ENCODE measurements at regions of chr4 and their contacts with region 1.

Region 1: DNA sequence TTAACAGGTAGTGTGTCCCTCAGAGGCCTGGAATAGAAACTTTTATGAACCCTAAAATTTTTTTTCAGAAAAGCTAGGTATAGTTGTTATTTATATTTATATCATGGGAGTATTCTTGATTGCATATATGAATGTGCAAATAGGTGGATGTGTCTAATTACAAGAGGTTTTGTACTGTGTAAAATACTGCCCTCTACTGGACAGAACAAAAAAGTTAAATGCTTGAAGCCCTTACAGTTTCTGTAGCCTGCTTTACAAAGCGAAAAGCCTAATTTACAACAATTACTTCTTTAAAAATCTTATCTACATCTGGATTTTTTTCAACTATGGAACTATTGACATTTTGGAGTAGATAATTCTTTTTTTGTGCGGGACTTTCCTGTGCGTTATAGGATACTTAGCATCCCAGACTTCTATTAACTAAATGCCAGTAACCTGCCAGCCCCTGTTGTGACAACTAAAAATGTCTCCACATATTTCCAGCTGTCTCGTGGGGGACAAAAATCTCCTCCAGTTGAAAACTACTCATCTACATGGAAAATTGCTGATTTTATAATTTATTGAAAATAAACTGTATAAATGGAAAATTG is 35.1 kb downstream of the ENPEP start:
- DNase-seq: peak in 1 of 2 experiments; percentile 38
- H3K4me3 ChIP-seq: no peak overlapping the region
- H3K4me3 Mint-ChIP-seq: no peak overlapping the region
- H3K27ac Mint-ChIP-seq: no peak overlapping the region
- H3K4me1 ChIP-seq: no peaks in the 10 kb centered on the region
- H3K4me1 Mint-ChIP-seq: no peaks in the 10 kb centered on the region
- H3K27me3 ChIP-seq: no peaks in the 10 kb centered on the region
- H3K27me3 Mint-ChIP-seq: no peaks in the 10 kb centered on the region
- CTCF ChIP-seq: peak; percentile 56 to 60

Region 2: DNA sequence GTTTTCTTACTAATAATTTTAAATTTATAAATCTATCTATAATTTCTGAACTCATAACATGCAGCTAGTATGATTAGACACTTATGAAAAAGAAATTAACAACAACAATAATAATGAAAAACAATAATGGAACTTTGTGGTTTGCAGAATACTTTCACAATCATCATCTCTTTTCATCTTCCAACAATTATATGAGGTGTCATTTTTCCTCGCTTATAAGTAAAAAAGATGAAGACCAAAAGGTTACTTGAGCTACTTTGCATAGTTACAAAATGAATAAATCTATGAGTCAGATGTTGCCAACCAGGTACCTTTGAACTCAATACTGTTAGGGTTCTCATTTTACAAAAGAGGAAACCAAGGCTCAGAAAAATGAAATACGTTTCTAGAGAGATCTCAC is 214.2 kb before region 1 on chr4:
- CTCF ChIA-PET with region 1: no interaction called
- POLR2A ChIA-PET with region 1: no interaction called
- intact Hi-C with region 1: no loop called
- DNase-seq: no peak
- H3K4me3 ChIP-seq: no peak overlapping the region
- H3K4me3 Mint-ChIP-seq: no peak overlapping the region
- H3K27ac Mint-ChIP-seq: no peak overlapping the region
- H3K4me1 ChIP-seq: no peaks in the 10 kb centered on the region
- H3K4me1 Mint-ChIP-seq: no peaks in the 10 kb centered on the region
- H3K27me3 ChIP-seq: no peaks in the 10 kb centered on the region
- H3K27me3 Mint-ChIP-seq: peaks cover 10% of the 10 kb centered on the region
- CTCF ChIP-seq: no peak

Region 3: DNA sequence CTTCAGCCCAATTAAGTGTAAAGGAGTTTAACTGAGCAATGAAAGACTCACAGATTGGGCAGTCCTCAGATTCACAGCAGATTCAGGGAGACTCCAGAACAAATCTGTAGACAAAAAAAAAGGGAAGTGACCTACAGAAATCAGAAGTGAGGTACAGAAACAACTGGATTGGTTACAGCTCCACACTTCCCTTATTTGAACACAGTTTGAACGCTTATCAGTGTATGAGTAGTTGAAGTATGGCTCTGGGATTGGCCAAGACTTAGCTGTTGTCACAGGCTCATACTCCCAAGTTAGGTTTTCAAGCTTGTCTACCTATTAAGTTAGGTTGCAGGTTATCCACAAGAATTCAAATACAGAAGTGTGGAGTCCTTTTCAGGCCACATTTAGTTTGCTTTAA is 200.3 kb before region 1 on chr4:
- CTCF ChIA-PET with region 1: interaction called, 8 read pairs
- POLR2A ChIA-PET with region 1: no interaction called
- intact Hi-C with region 1: loop called (anchors 1 kb)
- DNase-seq: no peak
- H3K4me3 ChIP-seq: no peak overlapping the region
- H3K4me3 Mint-ChIP-seq: no peak overlapping the region
- H3K27ac Mint-ChIP-seq: no peak overlapping the region
- H3K4me1 ChIP-seq: no peaks in the 10 kb centered on the region
- H3K4me1 Mint-ChIP-seq: no peaks in the 10 kb centered on the region
- H3K27me3 ChIP-seq: no peaks in the 10 kb centered on the region; the same call in 1 of the 2 replicates
- H3K27me3 Mint-ChIP-seq: peaks cover 8% of the 10 kb centered on the region
- CTCF ChIP-seq: no peak

Region 4: GRCh38 chr4:110442156-110442703 is 68.8 kb before region 1 on chr4:
- CTCF ChIA-PET with region 1: no interaction called
- POLR2A ChIA-PET with region 1: no interaction called
- intact Hi-C with region 1: loop called (anchors 2 kb)
- DNase-seq: no peak
- H3K4me3 ChIP-seq: no peak overlapping the region
- H3K4me3 Mint-ChIP-seq: no peak overlapping the region
- H3K27ac Mint-ChIP-seq: no peak overlapping the region
- H3K4me1 ChIP-seq: no peaks in the 10 kb centered on the region
- H3K4me1 Mint-ChIP-seq: no peaks in the 10 kb centered on the region
- H3K27me3 ChIP-seq: no peaks in the 10 kb centered on the region
- H3K27me3 Mint-ChIP-seq: no peaks in the 10 kb centered on the region
- CTCF ChIP-seq: no peak

Region 5: DNA sequence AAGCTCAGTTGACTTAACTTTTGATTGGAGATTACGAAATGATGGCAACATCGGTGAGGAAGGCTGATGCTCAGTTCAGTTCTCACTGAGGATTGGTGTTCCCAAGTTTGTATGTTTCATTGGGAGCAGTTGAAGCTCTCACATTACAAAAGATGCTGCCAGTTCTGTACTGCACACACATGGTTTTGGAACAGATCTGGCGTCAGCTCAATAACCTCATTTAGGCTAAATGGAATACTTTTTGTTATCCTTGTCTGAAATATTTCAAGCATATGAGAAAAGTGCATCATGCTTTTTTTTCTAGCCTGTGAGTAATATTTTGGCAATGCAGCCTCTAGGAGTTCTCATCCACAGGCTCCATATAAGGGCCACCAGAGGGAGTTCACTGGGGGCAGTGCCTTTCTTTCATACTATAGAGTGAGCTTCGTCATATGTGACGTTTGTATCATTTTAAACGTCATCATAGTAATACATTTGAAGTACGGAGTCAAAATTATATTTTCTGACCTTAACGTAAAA is 31.0 kb before region 1 on chr4:
- CTCF ChIA-PET with region 1: no interaction called
- POLR2A ChIA-PET with region 1: no interaction called
- intact Hi-C with region 1: loop called (anchors 2 kb)
- DNase-seq: no peak
- H3K4me3 ChIP-seq: no peak overlapping the region
- H3K4me3 Mint-ChIP-seq: peak overlapping the region; percentile 10
- H3K27ac Mint-ChIP-seq: no peak overlapping the region
- H3K4me1 ChIP-seq: peaks cover 4% of the 10 kb centered on the region; the same call in 1 of the 2 replicates
- H3K4me1 Mint-ChIP-seq: peaks cover 13% of the 10 kb centered on the region
- H3K27me3 ChIP-seq: no peaks in the 10 kb centered on the region
- H3K27me3 Mint-ChIP-seq: peaks cover 2% of the 10 kb centered on the region
- CTCF ChIP-seq: peak; percentile 24 to 26

Measured in Caco-2 (cell line).